ENCODE measurements at regions of chr6 and their contacts with region 1.

Region 1: GRCh38 chr6:121285041-121285440 is 49.2 kb downstream of the TBC1D32 start:
- DNase-seq: no peak

Region 2: GRCh38 chr6:120700001-120700400 is 585.0 kb before region 1 on chr6:
- intact Hi-C with region 1: no loop called
- DNase-seq: no peak

Region 3: DNA sequence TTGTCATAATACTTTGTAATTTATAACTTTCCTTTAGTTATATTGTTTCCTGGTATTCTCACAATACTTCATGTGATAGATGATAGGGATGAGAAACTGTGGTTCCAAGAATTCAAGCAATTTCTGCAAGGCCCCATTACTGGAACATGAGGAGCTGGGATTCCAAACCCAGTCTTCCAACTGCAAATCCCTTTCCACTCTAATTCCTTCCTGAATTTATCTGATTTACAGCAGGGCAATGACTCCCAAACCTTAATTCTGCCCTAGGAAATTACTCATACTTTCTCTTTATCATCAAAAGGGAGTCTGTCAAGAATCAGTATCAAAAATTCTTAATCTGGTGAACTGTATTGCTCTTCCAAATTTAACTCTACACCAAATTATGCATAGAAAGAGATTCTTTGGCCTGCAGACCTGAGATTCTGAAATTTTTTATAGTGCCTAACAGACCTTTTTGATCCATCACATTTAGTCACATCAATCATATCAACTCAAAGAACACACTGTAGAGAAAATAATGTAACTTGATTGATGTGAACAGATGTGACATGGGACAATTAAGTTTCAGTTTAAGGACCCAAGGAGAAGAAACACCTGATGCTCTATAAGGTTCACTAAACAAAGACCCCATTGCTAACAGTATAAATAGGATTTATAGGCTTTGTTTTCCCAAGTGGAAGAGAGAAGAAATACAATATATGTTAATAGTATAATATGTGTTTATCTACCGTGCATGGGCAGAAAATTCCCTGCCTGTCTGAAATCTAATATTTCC is 108.9 kb after region 1 on chr6:
- intact Hi-C with region 1: no loop called
- DNase-seq: no peak

Region 4: DNA sequence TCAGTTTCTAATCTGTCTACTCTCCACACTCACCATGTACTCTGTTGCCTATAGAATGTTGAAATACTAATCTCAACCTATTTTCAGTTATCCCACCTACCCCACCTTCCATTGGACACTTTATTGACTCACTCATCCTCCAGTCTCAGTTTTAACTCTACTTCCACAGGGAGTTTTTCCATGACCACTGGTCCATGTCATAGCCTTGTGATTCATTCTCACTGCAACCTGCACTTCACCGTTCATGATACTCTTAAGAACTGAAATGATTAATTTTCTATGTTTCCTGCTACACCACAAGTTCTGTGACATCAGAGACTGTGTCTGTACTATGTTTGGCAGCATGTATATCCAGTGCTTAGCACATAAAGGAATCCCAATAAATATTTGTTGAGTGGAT is 991.6 kb after region 1 on chr6:
- intact Hi-C with region 1: loop called in 1 of 2 experiments (anchors 10 kb)
- DNase-seq: no peak